ENCODE measurements at regions of chr3 and their contacts with region 1.

Region 1: GRCh38 chr3:196317687-196318467 is at the start of gene DYNLT2B:
- DNase-seq: peak; percentile 94
- H3K4me3 ChIP-seq: peak within 1 kb of the TSS; percentile 48 to 96 (median 53)
- H3K27ac ChIP-seq: peak within 1 kb of the TSS; percentile 51
- H3K4me1 ChIP-seq: peaks cover 5% of the 10 kb centered on the region
- H3K27me3 ChIP-seq: no peaks in the 10 kb centered on the region
- CTCF ChIP-seq: no peak
- POLR2A ChIP-seq: peak; percentile 96
- total RNA-seq, gene DYNLT2B: 13.9 and 14.4 TPM in 2 replicates

Region 2: DNA sequence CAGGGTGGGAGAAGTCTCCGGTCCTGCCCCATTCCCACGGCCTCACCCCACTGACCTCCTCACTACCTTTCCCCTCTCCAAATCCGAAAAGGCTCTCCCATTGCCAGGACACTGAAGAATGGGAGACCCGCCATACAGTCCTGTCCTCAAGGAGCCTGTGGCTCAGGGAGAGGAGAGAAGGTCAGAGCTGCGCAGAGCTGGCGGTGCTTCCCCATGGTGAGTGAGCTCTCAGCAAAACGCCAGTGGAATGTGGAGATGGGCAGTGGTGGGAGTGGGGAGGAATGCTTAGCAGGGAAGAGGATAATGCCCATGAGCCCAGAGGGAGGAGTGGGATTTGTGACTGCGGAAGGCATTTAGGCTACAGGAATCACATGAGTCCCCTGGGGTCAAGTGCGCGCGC is 1612.1 kb before region 1 on chr3:
- CTCF ChIA-PET with region 1: no interaction called
- POLR2A ChIA-PET with region 1: no interaction called
- dilution Hi-C with region 1: no loop called
- intact Hi-C with region 1: no loop called
- DNase-seq: no peak
- H3K4me3 ChIP-seq: no peak overlapping the region
- H3K27ac ChIP-seq: no peak overlapping the region
- H3K4me1 ChIP-seq: peaks cover 3% of the 10 kb centered on the region
- H3K27me3 ChIP-seq: no peaks in the 10 kb centered on the region
- CTCF ChIP-seq: no peak
- POLR2A ChIP-seq: no peak

Region 3: DNA sequence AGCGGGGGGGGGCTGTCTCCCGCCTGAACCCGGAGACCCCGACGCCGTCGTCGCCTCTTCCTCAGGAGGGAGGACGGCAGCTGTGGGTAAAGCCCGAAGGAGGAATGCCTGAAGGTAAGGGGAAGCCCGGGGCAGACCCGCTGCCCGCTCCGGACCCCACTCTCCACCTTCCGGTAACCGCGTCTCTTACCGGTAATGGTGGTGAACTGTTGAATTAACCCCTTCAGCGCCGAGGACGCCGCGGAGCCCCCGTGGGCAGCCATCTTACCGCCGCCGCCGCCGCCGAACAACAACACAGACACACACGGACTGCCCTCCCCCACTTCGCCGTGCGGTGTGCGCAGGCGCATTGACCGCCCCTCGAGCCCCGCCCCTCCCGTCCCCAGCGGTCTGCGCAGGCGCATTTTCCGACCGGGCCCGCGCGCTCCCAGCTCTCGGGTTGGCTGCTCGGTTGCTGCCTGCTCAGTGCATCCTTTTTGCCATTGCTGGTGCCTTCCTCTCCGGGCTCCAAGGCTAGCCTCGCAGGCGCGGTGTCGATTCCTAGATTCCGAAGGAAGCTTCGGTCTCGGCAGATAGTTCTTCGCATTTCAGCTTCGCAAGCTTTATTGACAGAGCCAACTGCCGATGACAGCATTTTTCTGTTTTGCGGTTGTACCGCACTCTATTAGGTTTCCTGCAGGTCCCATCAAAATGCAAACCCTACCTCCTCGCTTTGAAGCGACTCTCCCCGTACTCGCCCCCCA is 114.4 kb after region 1 on chr3 and contains the start of gene UBXN7:
- CTCF ChIA-PET with region 1: interaction called, 3 read pairs
- POLR2A ChIA-PET with region 1: no interaction called
- dilution Hi-C with region 1: no loop called
- intact Hi-C with region 1: loop called (anchors 1 kb)
- DNase-seq: peak; percentile 97
- H3K4me3 ChIP-seq: peak within 1 kb of the TSS; percentile 65 to 87 (median 74)
- H3K27ac ChIP-seq: peak within 1 kb of the TSS; percentile 41
- H3K4me1 ChIP-seq: peaks cover 8% of the 10 kb centered on the region
- H3K27me3 ChIP-seq: no peaks in the 10 kb centered on the region
- CTCF ChIP-seq: no peak
- POLR2A ChIP-seq: peak; percentile 85
- total RNA-seq, gene UBXN7: 55.1 and 57.0 TPM in 2 replicates